ENCODE measurements at regions of chr17 and their contacts with region 1.

Region 1: GRCh38 chr17:7673239-7673638 is 14.1 kb downstream of the TP53 start:
- DNase-seq: peak; percentile 68
- H3K4me3 Mint-ChIP-seq: no peak overlapping the region
- H3K27ac Mint-ChIP-seq: no peak overlapping the region
- H3K4me1 Mint-ChIP-seq: no peaks in the 10 kb centered on the region
- H3K27me3 Mint-ChIP-seq: no peaks in the 10 kb centered on the region

Region 2: DNA sequence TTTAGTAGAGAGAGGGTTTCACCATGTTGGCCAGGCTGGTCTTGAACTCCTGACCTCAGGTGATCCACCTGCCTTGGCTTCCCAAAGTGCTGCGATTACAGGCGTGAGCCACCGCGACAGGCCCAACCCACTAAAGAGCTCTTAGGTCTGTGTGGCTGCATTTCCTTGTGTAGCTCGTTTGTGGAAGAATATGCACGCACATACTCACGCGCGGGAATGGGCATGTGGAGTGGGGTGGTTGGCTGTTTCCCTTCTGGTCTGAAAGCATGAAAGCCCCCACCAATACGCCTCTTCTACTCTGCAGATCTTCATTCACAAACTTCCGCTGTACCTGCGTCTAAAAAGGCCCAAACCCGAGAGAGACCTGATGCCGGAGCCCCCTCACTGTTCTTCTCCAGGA is 218.3 kb before region 1 on chr17:
- CTCF ChIA-PET with region 1: no interaction called
- POLR2A ChIA-PET with region 1: no interaction called
- intact Hi-C with region 1: no loop called
- DNase-seq: no peak
- H3K4me3 Mint-ChIP-seq: peak overlapping the region; percentile 93
- H3K27ac Mint-ChIP-seq: peak overlapping the region; percentile 96
- H3K4me1 Mint-ChIP-seq: peaks cover 13% of the 10 kb centered on the region
- H3K27me3 Mint-ChIP-seq: no peaks in the 10 kb centered on the region

Region 3: GRCh38 chr17:7632492-7632894 is 40.7 kb before region 1 on chr17:
- CTCF ChIA-PET with region 1: interaction called, 18 read pairs
- POLR2A ChIA-PET with region 1: interaction called, 3 read pairs
- intact Hi-C with region 1: no loop called
- DNase-seq: peak; percentile 49
- H3K4me3 Mint-ChIP-seq: no peak overlapping the region
- H3K27ac Mint-ChIP-seq: no peak overlapping the region
- H3K4me1 Mint-ChIP-seq: peaks cover 2% of the 10 kb centered on the region
- H3K27me3 Mint-ChIP-seq: no peaks in the 10 kb centered on the region

Region 4: DNA sequence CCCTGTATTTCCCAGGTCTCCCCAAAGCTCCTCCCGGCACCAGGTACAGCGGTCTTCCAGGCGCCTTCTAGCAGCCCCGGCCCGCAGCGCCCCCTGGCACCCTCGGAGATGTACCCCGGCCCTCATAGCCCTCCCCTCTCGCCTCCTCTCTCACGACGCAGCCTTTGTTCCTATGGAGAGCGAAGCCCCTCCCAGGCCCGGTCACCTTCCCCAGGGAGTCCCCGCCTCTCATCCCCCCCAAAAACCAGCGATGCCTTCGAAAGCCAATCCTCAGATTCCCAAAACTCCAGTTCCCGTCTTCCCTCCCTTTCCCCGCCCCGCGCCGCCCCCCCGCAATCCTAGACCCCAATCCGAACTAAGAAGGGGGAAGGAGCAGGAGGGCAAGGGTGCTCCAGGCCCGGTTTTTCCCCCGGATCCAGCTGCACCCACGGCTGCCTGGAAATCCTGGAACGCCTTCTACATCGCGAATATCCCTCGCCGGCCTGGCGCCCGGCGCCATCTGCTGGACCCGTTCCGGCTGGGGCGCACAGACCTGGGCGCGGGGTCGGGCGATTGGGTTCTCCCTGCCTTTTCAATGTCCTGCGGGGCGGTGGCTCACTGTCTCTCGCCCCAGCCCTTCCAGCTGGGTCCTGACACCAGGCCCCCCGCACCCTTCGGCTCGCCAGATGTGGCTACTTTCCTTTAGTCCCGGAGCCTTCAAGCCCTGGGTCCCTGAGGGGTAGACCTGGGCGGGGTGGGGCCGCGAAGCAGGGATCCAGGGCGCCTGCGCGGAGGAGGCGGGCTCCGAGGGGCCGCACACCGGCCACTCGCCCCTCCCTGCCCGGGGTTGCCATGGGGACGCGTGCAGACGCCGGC is 43.9 kb after region 1 on chr17 and contains the start of gene DNAH2:
- CTCF ChIA-PET with region 1: no interaction called
- POLR2A ChIA-PET with region 1: no interaction called
- intact Hi-C with region 1: no loop called
- DNase-seq: peak; percentile 54
- H3K4me3 Mint-ChIP-seq: peak within 1 kb of the TSS; percentile 73
- H3K27ac Mint-ChIP-seq: no peak within 1 kb of the TSS
- H3K4me1 Mint-ChIP-seq: peaks cover 14% of the 10 kb centered on the region
- H3K27me3 Mint-ChIP-seq: peaks cover 66% of the 10 kb centered on the region
- total RNA-seq, gene DNAH2: not detected

Measured in activated CD4-positive, alpha-beta memory T cell treated with anti-CD3 and anti-CD28 coated beads for 36 hours (primary cell).